ENCODE measurements at regions of chr9 and their contacts with region 1.

Region 1: DNA sequence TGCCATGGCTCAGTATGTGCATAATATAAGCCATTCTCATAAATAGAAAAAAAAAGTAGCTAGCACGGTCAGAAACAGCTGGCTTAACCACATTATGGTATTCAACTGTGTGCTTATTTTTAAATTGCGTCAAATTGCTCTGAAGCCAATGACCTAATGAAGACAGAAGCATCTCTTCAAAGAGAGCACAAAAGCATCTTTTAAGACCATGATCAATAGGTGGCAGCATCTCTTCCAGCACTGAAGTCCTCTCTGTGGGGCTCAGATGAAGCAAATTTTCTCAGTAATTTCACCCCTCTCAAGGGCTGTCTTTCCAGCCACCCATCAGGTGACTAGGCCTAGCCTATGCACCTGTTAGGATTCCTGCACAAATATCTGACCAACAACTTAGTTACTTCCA is 251.4 kb downstream of the GLIS3 start:
- DNase-seq: no peak
- H3K4me3 ChIP-seq: no peak overlapping the region
- H3K27ac ChIP-seq: no peak overlapping the region
- H3K27me3 ChIP-seq: no peaks in the 10 kb centered on the region
- CTCF ChIP-seq: peak in 45 of 56 donors; percentile 14 to 61 (median 37)

Region 2: GRCh38 chr9:3498691-3499090 is 549.8 kb before region 1 on chr9:
- intact Hi-C with region 1: no loop called
- DNase-seq: no peak
- H3K4me3 ChIP-seq: no peak overlapping the region
- H3K27ac ChIP-seq: no peak overlapping the region
- H3K27me3 ChIP-seq: no peaks in the 10 kb centered on the region
- CTCF ChIP-seq: no peak

Region 3: DNA sequence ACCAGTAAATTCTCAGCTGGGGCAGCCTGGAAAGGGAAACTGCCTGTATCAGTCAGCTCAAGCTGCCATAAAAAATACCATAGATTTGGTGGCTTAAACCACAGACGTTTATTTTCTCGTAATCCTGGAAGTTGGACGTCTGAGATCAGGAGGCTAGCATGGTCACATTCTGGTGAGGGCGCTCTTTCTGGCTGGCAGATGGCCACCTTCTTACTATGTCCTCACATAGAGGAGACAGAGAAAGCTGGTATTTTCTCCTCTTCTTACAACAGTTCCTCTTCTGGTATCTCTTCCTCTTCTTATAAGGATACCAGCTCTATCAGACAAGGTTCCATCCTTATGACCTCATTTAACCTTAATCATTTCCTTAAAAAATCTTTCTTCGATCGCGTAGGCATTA is 472.1 kb before region 1 on chr9:
- intact Hi-C with region 1: no loop called
- DNase-seq: peak in 1 of 10 donors; percentile 15
- H3K4me3 ChIP-seq: no peak overlapping the region
- H3K27ac ChIP-seq: peak overlapping the region in 1 of 59 donors; percentile 45
- H3K27me3 ChIP-seq: no peaks in the 10 kb centered on the region
- CTCF ChIP-seq: no peak

Region 4: DNA sequence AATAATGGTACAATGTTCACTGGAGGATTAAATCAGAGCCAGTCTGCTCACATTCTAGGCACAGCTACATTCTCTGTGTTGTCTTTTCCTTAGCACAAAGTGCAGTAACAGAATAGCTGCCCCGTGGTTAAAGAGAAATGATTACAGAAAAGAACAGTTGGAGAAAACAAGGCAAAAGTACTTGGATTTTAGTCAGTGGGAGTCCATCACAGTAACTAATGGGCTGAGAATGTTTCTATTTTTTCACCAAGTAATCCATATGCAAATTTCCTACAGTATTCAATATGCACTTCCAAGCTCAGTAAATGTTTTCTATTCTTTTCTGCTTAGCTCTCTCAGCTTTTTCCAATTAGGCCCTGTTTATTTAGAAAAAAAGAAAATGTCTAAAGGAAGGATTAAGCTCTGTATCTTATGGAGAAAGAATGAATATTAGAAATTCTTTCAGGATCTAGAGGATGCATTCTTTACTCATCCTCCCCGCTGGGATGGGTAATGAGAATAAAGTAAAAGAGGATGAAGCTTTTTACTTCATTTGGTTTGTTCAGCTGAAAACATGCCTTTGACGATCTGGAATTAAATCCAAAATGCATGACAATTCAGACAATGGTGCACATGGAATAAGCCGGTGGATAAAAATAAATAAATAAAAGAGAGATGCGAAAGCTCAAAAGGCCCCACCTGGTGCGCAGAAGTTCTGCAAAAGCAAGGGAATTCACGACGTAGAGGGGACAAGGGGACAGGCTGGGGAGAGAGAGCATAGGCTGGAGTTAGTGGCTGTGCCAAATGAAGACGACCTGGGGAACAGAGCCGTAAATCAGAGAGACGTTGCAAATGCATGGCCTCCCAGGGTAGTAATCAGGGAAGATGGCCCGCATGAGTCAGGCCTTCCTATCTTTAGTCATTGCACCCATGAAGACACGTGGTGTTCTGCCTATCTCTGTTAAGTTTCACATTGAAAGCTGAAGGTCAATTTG is 93.8 kb before region 1 on chr9:
- intact Hi-C with region 1: no loop called
- DNase-seq: no peak
- H3K4me3 ChIP-seq: no peak overlapping the region
- H3K27ac ChIP-seq: peak overlapping the region in 45 of 59 donors; percentile 7 to 77 (median 54)
- H3K27me3 ChIP-seq: peaks cover 0 to 4% (median 0%) of the 10 kb centered on the region in 45 donors
- CTCF ChIP-seq: no peak

Region 5: DNA sequence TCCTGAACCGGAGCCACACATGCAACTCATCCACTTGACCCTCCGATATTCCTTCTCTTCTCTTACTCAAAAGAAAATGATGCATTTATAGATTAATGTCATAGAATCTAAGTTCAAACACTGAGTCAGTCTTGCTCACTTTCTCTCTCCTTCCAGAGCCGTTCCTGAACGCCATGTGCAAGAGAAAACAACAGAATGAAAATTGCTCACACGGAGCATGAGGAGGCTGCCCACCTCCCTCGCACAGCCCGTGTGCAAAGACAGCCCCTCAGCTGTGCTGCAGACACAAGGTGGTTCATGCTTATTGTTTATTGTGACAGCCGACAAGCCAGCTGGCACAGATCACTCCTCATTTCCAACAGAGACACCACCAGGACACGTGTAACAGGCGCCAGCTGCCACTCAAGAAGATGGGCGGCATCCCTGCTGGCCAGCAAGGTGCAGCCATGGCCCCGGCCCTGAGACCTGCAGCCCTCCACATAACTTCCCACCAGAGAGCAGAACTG is 39.4 kb before region 1 on chr9:
- intact Hi-C with region 1: no loop called
- DNase-seq: peak in 3 of 10 donors; percentile 11 to 33 (median 28)
- H3K4me3 ChIP-seq: no peak overlapping the region
- H3K27ac ChIP-seq: no peak overlapping the region
- H3K27me3 ChIP-seq: no peaks in the 10 kb centered on the region
- CTCF ChIP-seq: no peak

Region 6: DNA sequence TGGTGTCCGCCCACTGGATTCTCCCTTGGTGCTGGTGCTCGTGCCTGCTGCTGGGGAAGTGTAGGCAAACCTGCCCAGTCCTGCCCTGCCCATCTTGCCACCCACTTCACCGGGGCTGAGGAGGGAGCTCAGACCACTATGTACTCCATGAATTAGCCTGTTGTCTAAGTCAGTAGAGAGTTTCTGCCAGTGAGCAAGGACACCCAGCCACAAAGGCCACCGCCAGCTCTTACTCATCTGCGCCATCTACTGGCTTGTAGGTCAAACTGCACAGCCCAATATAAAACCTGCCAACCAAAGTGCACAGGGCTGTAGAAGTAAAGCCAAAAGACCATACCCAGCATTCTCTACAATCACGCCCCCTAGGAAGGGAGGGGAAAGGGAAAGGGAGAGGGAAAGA is 149.1 kb after region 1 on chr9:
- intact Hi-C with region 1: loop called in 1 of 2 experiments (anchors 10 kb)
- DNase-seq: no peak
- H3K4me3 ChIP-seq: no peak overlapping the region
- H3K27ac ChIP-seq: no peak overlapping the region
- H3K27me3 ChIP-seq: peaks cover 0 to 3% (median 0%) of the 10 kb centered on the region in 45 donors
- CTCF ChIP-seq: peak in 50 of 56 donors; percentile 10 to 69 (median 50)

Measured in dorsolateral prefrontal cortex (tissue), 120 donors.